BJ (cell line): ENCODE measurements at regions of chr19 and their contacts with region 1.

Region 1: GRCh38 chr19:40633207-40633606 is 32.0 kb downstream of the LTBP4 start:
- DNase-seq: peak; percentile 36
- H3K4me3 ChIP-seq: no peak overlapping the region
- H3K27me3 ChIP-seq: no peaks in the 10 kb centered on the region; the same call in 1 of the 2 replicates
- CTCF ChIP-seq: no peak

Region 2: GRCh38 chr19:40465557-40466150 is 167.6 kb before region 1 on chr19 and contains the start of gene BLVRB:
- CTCF ChIA-PET with region 1: interaction called, 20 read pairs
- POLR2A ChIA-PET with region 1: no interaction called
- DNase-seq: peak; percentile 97
- H3K4me3 ChIP-seq: peak within 1 kb of the TSS; percentile 64
- H3K27me3 ChIP-seq: no peaks in the 10 kb centered on the region
- CTCF ChIP-seq: no peak
- polyA plus RNA-seq, gene BLVRB: 41.5 and 71.4 TPM in 2 replicates

Region 3: GRCh38 chr19:40542202-40542859 is 90.9 kb before region 1 on chr19:
- CTCF ChIA-PET with region 1: interaction called, 41 read pairs
- POLR2A ChIA-PET with region 1: no interaction called
- DNase-seq: no peak
- H3K4me3 ChIP-seq: no peak overlapping the region
- H3K27me3 ChIP-seq: 0 out of 2 replicates have a peak, but pooled peaks cover 1% of the 10 kb centered on the region
- CTCF ChIP-seq: no peak

Region 4: DNA sequence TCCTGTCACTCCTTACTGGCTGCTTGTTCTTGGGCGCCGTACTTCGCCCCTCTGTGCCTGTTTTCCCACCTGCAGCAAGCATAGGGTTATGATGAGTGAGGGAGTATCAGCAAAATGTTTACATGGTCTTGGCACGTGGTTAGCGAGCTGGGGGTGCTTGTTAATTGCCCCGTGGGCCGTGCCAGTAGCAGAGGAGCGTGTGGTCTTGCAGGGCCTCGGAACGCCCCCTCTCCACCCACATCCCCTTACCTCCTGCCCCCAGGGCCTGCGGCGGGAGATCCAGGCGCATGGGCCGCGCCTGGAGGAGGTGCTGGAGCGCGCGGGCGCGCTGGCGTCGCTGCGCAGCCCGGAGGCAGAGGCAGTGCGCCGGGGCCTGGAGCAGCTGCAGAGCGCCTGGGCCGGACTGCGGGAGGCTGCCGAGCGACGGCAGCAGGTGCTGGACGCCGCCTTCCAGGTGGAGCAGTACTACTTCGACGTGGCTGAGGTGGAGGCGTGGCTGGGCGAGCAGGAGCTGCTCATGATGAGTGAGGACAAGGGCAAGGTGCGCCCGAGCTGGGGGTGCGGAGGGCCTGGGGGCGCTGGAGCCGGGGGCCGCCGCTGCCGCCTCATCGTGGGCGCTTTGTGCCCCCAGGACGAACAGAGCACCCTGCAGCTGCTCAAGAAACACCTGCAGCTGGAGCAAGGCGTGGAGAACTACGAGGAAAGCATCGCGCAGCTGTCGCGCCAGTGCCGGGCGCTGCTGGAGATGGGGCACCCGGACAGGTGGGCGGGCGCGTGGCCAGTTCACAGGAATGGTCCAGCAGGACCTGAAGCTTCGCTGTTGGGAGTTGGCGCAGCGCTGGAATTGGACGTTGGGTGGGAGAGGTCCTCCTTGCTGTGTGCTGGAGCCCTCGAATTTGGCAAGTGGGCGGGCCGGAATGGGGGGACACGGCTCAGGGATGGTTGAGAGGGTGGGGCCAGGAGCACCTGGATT is 79.0 kb before region 1 on chr19:
- CTCF ChIA-PET with region 1: interaction called, 17 read pairs
- POLR2A ChIA-PET with region 1: no interaction called
- DNase-seq: no peak
- H3K4me3 ChIP-seq: no peak overlapping the region
- H3K27me3 ChIP-seq: peaks cover 15% of the 10 kb centered on the region
- CTCF ChIP-seq: no peak

Region 5: DNA sequence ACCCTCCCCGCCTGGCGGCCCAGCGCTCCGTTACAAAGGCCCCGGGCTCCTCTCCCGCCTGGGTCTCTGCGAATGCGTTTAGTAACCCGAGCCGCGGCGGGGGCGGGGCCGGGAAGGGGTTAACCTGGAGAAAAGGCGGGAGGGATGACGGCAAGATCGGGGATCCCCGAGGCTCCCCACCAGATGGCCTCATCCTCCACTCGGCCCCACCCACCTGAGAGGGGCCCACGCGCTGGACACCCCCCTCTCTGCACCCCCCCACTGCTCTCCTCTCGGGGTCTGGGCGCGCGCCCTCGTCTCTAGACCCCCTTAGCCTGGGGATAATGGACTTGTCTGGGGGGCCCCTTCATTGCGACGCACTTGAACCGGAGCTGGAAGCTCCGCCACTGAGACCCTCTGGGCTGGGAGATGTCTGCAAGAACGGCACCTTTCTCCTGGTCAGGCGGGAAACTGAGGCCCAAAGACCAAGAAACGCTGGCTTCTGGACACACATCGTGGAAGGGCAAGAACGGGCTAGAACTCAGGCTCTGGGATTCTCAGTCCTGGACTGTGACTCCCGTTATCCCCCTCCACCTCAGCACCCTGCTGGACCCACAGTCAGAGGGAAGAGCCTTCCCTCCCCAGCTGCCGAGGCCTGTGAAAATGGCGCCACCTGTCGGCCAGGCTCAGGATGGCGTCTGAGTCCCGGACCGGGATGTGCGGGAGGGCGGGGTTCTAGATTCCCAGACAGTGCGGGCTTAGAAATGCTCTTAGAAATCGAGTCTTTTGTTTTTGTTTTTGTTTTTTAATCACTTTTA is 34.9 kb before region 1 on chr19:
- CTCF ChIA-PET with region 1: interaction called, 171 read pairs
- POLR2A ChIA-PET with region 1: no interaction called
- DNase-seq: no peak
- H3K4me3 ChIP-seq: peak overlapping the region; percentile 37
- H3K27me3 ChIP-seq: 0 out of 2 replicates have a peak, but pooled peaks cover 2% of the 10 kb centered on the region
- CTCF ChIP-seq: peak; percentile 99

Region 6: GRCh38 chr19:40609561-40610395 is 23.4 kb before region 1 on chr19:
- CTCF ChIA-PET with region 1: interaction called, 171 read pairs
- POLR2A ChIA-PET with region 1: no interaction called
- DNase-seq: no peak
- H3K4me3 ChIP-seq: peak overlapping the region; percentile 27
- H3K27me3 ChIP-seq: no peaks in the 10 kb centered on the region
- CTCF ChIP-seq: no peak